ENCODE measurements at regions of chr15 and their contacts with region 1.

Region 1: DNA sequence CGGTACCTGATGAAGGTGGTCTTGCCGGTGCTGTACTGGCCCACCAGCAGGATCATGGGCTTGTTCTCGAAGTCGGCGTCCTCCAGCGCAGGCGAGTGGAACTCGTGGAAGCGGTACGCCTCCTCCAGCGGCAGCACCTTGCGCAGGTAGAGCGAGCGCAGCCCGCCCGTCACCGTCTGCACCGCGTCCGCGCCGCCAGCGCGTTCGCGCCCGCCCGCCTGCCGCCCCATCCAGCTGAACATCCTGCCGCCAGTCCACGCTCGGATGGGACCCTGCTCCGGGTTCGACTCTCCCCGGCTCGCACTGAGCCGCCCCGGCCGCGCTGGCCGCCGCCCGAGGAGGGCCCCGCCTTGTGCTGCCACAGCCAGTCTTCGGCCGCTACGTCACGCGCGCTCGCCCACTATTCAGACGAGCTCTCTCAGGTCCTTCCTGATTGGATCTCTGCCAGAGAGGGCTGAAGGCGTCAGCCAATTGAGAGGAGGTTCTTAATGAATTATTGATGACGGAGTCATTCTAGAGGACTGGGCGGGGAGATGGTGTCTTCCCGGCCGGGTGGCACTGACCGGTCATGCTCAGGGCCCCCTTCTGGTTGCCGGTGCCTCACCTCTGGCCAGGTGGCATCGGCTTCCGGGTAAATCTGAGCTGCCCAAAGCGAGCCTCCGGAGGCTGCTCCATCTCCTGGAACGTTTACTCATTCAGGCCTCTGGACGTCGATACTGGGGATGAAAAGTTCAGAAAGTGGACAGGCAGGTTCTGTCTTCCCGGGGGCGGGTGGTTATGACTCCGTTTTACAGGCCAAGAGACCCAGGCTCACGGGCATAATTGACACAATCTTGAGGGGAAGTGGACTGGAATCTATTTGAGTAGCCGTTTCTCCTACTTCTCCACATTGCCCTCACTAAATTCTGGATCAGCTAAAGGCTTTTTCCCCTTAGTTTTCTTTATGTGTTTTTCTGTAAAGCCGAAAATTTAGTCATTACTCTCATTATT is at the start of gene EHD4:
- DNase-seq: peak; percentile 85 to 98 (median 94)
- ATAC-seq: peak; percentile 81
- H3K4me3 ChIP-seq: peak within 1 kb of the TSS; percentile 69 to 77
- H3K4me3 Mint-ChIP-seq: peak within 1 kb of the TSS; percentile 97
- H3K27ac ChIP-seq: peak within 1 kb of the TSS; percentile 83 to 86
- H3K27ac Mint-ChIP-seq: peak within 1 kb of the TSS; percentile 97
- H3K4me1 ChIP-seq: peaks cover 21% of the 10 kb centered on the region
- H3K4me1 Mint-ChIP-seq: peaks cover 44% of the 10 kb centered on the region
- H3K27me3 ChIP-seq: peaks cover 0 to 4% of the 10 kb centered on the region in 2 experiments
- H3K27me3 Mint-ChIP-seq: peaks cover 5% of the 10 kb centered on the region
- CTCF ChIP-seq: no peak
- total RNA-seq, gene EHD4: 36.4 to 40.5 TPM

Region 2: GRCh38 chr15:40754883-40755811 is 1217.4 kb before region 1 on chr15 and contains the start of gene RMDN3:
- CTCF ChIA-PET with region 1: no interaction called
- POLR2A ChIA-PET with region 1: no interaction called
- intact Hi-C with region 1: loop called in 1 of 2 experiments (anchors 5 kb)
- DNase-seq: peak; percentile 84 to 96 (median 93)
- ATAC-seq: peak; percentile 95
- H3K4me3 ChIP-seq: peak within 1 kb of the TSS; percentile 99
- H3K4me3 Mint-ChIP-seq: peak within 1 kb of the TSS; percentile 94
- H3K27ac ChIP-seq: peak within 1 kb of the TSS; percentile 91 to 94
- H3K27ac Mint-ChIP-seq: peak within 1 kb of the TSS; percentile 94
- H3K4me1 ChIP-seq: peaks cover 6% of the 10 kb centered on the region
- H3K4me1 Mint-ChIP-seq: peaks cover 26% of the 10 kb centered on the region
- H3K27me3 ChIP-seq: no peaks in the 10 kb centered on the region
- H3K27me3 Mint-ChIP-seq: no peaks in the 10 kb centered on the region
- CTCF ChIP-seq: no peak
- total RNA-seq, gene RMDN3: 26.7 to 30.5 TPM

Region 3: GRCh38 chr15:41493205-41493901 is 479.2 kb before region 1 on chr15 and contains the start of gene ITPKA:
- CTCF ChIA-PET with region 1: no interaction called
- POLR2A ChIA-PET with region 1: no interaction called
- intact Hi-C with region 1: loop called in 1 of 2 experiments (anchors 5 kb)
- DNase-seq: peak; percentile 38 to 87 (median 74)
- ATAC-seq: peak; percentile 82
- H3K4me3 ChIP-seq: peak within 1 kb of the TSS; percentile 64 to 75
- H3K4me3 Mint-ChIP-seq: peak within 1 kb of the TSS; percentile 79
- H3K27ac ChIP-seq: no peak within 1 kb of the TSS
- H3K27ac Mint-ChIP-seq: no peak within 1 kb of the TSS
- H3K4me1 ChIP-seq: peaks cover 31% of the 10 kb centered on the region
- H3K4me1 Mint-ChIP-seq: peaks cover 15% of the 10 kb centered on the region
- H3K27me3 ChIP-seq: peaks cover 33 to 54% of the 10 kb centered on the region in 2 experiments
- H3K27me3 Mint-ChIP-seq: peaks cover 38% of the 10 kb centered on the region
- CTCF ChIP-seq: no peak
- total RNA-seq, gene ITPKA: 0.50 TPM in 1 of 2 experiments, not detected in the other

Region 4: DNA sequence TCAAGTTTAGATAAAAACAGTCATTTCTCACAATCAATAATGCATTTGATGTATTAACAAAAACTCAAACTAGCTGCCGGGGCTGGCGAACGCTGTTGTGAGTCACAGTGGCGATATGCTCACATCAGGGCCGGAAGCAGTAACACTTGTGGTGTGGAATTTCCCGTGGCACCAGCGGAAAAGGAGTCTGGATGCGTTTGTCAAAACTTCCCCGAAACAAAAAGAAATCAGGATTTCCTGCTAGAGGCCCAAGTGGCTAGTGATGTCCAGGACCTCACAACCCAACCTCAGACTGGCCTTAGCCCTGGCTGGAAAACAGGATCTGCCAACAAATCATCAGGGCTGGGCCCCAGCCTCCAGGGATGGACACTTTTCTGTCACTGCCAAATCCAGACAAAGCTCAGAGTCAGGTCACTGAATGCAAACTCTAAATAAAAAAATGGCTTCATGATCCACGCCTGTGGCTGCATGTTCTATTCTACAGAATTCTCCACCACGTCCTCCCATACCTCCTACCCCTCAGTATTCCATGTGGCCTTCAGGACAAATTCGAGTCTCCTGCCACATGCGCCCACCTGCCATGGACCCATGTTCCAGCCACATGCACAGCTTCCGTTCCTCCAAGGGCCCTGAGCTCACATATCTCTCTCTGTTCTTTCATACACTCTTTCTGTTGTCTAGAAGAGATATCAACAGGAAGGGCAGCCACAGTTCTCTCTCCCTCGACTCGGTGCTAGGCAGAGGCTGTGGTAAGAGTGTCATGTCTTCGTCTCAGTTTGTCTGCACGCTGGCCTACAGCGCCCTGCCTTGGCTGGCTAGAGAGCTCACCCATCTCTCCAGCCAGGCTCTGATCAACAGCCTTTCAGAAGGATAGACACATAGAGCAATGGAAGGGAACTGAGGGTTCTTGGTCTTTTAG is 35.6 kb before region 1 on chr15:
- CTCF ChIA-PET with region 1: interaction called, 11 read pairs
- POLR2A ChIA-PET with region 1: interaction called, 36 read pairs
- intact Hi-C with region 1: loop called (anchors 1 kb)
- DNase-seq: peak; percentile 52 to 94 (median 74)
- ATAC-seq: peak; percentile 80
- H3K4me3 ChIP-seq: peak overlapping the region; percentile 9 to 27
- H3K4me3 Mint-ChIP-seq: peak overlapping the region; percentile 75
- H3K27ac ChIP-seq: peak overlapping the region; percentile 86 to 97
- H3K27ac Mint-ChIP-seq: peak overlapping the region; percentile 96
- H3K4me1 ChIP-seq: peaks cover 55% of the 10 kb centered on the region
- H3K4me1 Mint-ChIP-seq: peaks cover 58% of the 10 kb centered on the region
- H3K27me3 ChIP-seq: no peaks in the 10 kb centered on the region
- H3K27me3 Mint-ChIP-seq: no peaks in the 10 kb centered on the region
- CTCF ChIP-seq: peak; percentile 39

Region 5: GRCh38 chr15:42670451-42670850 is 697.9 kb after region 1 on chr15:
- CTCF ChIA-PET with region 1: no interaction called
- POLR2A ChIA-PET with region 1: no interaction called
- intact Hi-C with region 1: no loop called
- DNase-seq: no peak
- ATAC-seq: no peak
- H3K4me3 ChIP-seq: no peak overlapping the region
- H3K4me3 Mint-ChIP-seq: no peak overlapping the region
- H3K27ac ChIP-seq: no peak overlapping the region
- H3K27ac Mint-ChIP-seq: no peak overlapping the region
- H3K4me1 ChIP-seq: no peaks in the 10 kb centered on the region
- H3K4me1 Mint-ChIP-seq: no peaks in the 10 kb centered on the region
- H3K27me3 ChIP-seq: no peaks in the 10 kb centered on the region
- H3K27me3 Mint-ChIP-seq: no peaks in the 10 kb centered on the region
- CTCF ChIP-seq: no peak

Region 6: DNA sequence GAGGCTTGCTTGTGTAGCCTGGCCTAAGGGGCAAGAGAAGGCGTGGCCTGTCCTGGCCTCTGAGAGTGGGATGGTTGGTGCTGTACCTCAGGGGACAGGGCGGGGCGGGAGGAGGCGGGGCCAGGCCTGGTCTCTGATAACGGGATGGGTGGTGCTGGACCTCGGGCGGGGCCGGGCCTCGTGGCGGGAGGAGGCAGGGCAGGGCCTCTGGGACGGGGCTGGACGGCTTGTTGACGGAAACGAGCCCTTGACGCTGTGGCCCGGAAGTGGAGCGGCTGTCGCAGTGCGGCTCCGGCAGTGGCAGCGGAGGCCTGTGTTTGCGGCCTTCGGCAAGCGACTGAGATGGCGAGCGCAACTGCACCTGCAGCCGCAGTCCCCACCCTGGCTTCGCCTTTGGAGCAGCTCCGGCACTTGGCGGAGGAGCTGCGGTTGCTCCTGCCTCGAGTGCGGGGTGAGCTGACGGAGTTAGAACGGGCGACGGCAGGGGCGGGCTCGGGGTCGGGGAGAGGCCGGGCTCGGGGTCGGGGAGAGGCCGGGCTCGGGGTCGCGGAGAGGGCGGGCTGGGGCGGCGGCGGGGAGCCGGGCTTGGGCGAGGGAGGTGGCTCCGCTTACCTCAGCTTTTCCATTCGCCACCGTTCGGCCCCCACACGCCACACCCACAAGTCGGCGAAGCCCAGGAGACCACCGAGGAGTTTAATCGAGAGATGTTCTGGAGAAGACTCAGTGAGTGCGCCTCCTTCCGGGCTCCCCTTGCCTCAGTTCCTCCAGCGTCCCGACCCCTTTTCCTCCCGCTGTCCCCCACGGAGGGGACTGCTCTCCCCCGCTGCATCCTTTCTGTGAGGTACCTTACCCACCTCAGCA is 1212.8 kb after region 1 on chr15 and contains the start of gene CCNDBP1:
- CTCF ChIA-PET with region 1: no interaction called
- POLR2A ChIA-PET with region 1: no interaction called
- intact Hi-C with region 1: loop called in 1 of 2 experiments (anchors 5 kb)
- DNase-seq: peak; percentile 73 to 93 (median 86)
- ATAC-seq: peak; percentile 75
- H3K4me3 ChIP-seq: peak within 1 kb of the TSS; percentile 82 to 97
- H3K4me3 Mint-ChIP-seq: peak within 1 kb of the TSS; percentile 97
- H3K27ac ChIP-seq: peak within 1 kb of the TSS; percentile 87 to 91
- H3K27ac Mint-ChIP-seq: peak within 1 kb of the TSS; percentile 98
- H3K4me1 ChIP-seq: peaks cover 18% of the 10 kb centered on the region
- H3K4me1 Mint-ChIP-seq: peaks cover 43% of the 10 kb centered on the region
- H3K27me3 ChIP-seq: no peaks in the 10 kb centered on the region
- H3K27me3 Mint-ChIP-seq: no peaks in the 10 kb centered on the region
- CTCF ChIP-seq: peak; percentile 56
- total RNA-seq, gene CCNDBP1: 80.3 to 81.1 TPM